PC-9 (cell line): ENCODE measurements at regions of chr10 and their contacts with region 1.

Region 1: GRCh38 chr10:24432472-24433416 is 223.8 kb downstream of the KIAA1217 start:
- DNase-seq: peak; percentile 58 to 93
- H3K4me3 ChIP-seq: no peak overlapping the region
- H3K27ac ChIP-seq: peak overlapping the region; percentile 64
- H3K4me1 ChIP-seq: peaks cover 44% of the 10 kb centered on the region
- H3K27me3 ChIP-seq: no peaks in the 10 kb centered on the region
- CTCF ChIP-seq: no peak

Region 2: GRCh38 chr10:24209946-24210491 is 222.7 kb before region 1 on chr10:
- CTCF ChIA-PET with region 1: no interaction called
- POLR2A ChIA-PET with region 1: interaction called, 10 read pairs
- intact Hi-C with region 1: no loop called
- DNase-seq: peak in 1 of 2 experiments; percentile 53
- H3K4me3 ChIP-seq: peak overlapping the region; percentile 47; the same call in 1 of the 2 replicates
- H3K27ac ChIP-seq: 0 out of 2 replicates have a peak overlapping the region, but pooled peaks have one; percentile 77
- H3K4me1 ChIP-seq: peaks cover 38% of the 10 kb centered on the region
- H3K27me3 ChIP-seq: no peaks in the 10 kb centered on the region
- CTCF ChIP-seq: no peak

Region 3: DNA sequence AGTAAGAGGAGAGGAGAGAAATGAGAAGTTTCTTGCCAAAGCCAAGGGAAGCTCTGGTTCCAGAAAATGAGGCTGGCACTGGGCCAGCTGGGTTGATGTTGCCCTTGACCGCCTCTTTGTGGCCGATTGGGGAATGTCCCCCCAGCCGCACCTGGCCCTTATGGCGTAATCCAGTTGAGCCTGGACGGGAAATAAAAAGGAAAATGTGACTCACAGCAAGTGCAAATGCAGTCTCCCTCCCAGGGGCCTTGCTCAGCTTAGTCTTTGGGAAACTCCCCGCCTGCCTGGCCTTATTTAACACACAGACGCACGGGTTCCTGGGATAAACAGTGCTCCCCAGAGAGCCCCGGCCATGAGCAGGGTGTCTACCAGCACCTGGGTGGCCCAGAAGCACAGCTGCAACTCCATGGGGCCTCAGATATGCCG is 49.0 kb before region 1 on chr10:
- CTCF ChIA-PET with region 1: interaction called, 10 read pairs
- POLR2A ChIA-PET with region 1: no interaction called
- intact Hi-C with region 1: no loop called
- DNase-seq: peak; percentile 83 to 91
- H3K4me3 ChIP-seq: no peak overlapping the region; the same call in 1 of the 2 replicates
- H3K27ac ChIP-seq: peak overlapping the region; percentile 65; the same call in 1 of the 2 replicates
- H3K4me1 ChIP-seq: peaks cover 8% of the 10 kb centered on the region; the same call in 1 of the 2 replicates
- H3K27me3 ChIP-seq: no peaks in the 10 kb centered on the region
- CTCF ChIP-seq: peak; percentile 63

Region 4: DNA sequence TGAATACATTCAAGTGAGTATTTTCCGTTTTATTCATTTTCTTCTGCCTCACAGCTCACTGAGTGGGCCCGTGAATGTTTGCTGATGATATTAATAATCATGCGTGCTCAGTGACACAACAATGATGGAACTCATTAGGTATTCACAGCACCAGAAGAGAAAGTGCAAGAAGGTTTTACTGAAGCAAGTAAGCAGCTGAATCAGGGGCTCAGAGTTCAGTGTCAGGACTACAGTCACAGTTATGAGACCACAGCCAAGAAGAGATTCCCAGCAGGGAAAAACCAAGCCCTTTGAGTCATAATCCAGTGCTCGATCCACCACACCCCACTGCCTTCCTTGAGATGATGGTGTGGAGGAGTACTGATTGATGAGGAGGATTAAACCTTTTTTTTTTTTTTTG is 23.6 kb after region 1 on chr10:
- CTCF ChIA-PET with region 1: no interaction called
- POLR2A ChIA-PET with region 1: interaction called, 6 read pairs
- intact Hi-C with region 1: loop called (anchors 1 kb)
- DNase-seq: peak in 1 of 2 experiments; percentile 62
- H3K4me3 ChIP-seq: no peak overlapping the region
- H3K27ac ChIP-seq: no peak overlapping the region
- H3K4me1 ChIP-seq: peaks cover 19% of the 10 kb centered on the region
- H3K27me3 ChIP-seq: no peaks in the 10 kb centered on the region
- CTCF ChIP-seq: no peak

Region 5: GRCh38 chr10:24465891-24466818 is 33.4 kb after region 1 on chr10:
- CTCF ChIA-PET with region 1: no interaction called
- POLR2A ChIA-PET with region 1: no interaction called
- intact Hi-C with region 1: loop called (anchors 2 kb)
- DNase-seq: peak; percentile 62 to 94
- H3K4me3 ChIP-seq: peak overlapping the region; percentile 80
- H3K27ac ChIP-seq: peak overlapping the region; percentile 94
- H3K4me1 ChIP-seq: peaks cover 69% of the 10 kb centered on the region
- H3K27me3 ChIP-seq: no peaks in the 10 kb centered on the region
- CTCF ChIP-seq: no peak

Region 6: DNA sequence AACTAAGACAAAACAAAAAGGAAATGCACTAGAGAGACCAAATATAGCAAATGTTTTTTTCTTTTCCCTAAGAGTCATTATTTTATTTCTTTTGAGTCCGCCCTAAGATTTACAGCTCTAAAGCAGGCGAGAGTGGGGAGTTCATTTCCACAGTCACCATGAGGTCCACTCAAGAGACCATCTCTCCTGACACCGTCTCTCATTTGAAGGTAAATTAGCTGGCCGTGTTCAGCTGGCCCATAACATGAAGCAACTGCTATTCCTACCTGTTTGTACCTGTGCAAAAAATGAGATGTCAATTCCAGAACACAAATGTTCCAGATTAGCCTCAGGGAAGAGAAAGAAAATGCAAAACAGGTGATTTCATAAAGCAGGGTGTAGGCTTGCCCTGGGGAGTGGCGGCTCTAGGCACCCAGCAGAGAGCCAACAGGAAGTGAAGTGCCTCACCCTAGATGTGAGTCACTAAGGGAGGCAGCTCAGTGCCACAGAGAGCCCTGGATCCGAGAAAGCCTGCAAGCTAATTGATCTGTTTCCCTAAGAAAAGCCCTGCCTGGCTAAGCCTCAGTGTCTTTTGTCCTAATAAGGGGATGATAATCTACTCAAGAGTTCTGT is 50.9 kb after region 1 on chr10:
- CTCF ChIA-PET with region 1: no interaction called
- POLR2A ChIA-PET with region 1: interaction called, 6 read pairs
- intact Hi-C with region 1: loop called (anchors 2 kb)
- DNase-seq: peak; percentile 85 to 94
- H3K4me3 ChIP-seq: no peak overlapping the region
- H3K27ac ChIP-seq: peak overlapping the region; percentile 58
- H3K4me1 ChIP-seq: peaks cover 31% of the 10 kb centered on the region
- H3K27me3 ChIP-seq: no peaks in the 10 kb centered on the region
- CTCF ChIP-seq: no peak

Region 7: GRCh38 chr10:24625778-24626177 is 193.0 kb after region 1 on chr10:
- CTCF ChIA-PET with region 1: no interaction called
- POLR2A ChIA-PET with region 1: interaction called, 11 read pairs
- intact Hi-C with region 1: no loop called
- DNase-seq: no peak
- H3K4me3 ChIP-seq: no peak overlapping the region
- H3K27ac ChIP-seq: no peak overlapping the region
- H3K4me1 ChIP-seq: no peaks in the 10 kb centered on the region
- H3K27me3 ChIP-seq: no peaks in the 10 kb centered on the region
- CTCF ChIP-seq: no peak